ENCODE measurements at regions of chr11 and their contacts with region 1.

Region 1: GRCh38 chr11:36258730-36259360 is 30.4 kb downstream of the COMMD9 start:
- DNase-seq: no peak
- ATAC-seq: peak; percentile 87
- H3K4me3 ChIP-seq: no peak overlapping the region
- H3K27ac ChIP-seq: no peak overlapping the region
- H3K4me1 ChIP-seq: no peaks in the 10 kb centered on the region
- H3K27me3 ChIP-seq: no peaks in the 10 kb centered on the region; a peak in 1 of 4 replicates
- CTCF ChIP-seq: peak; percentile 42 to 45 (median 43); a peak in 5 of 6 replicates
- EP300 ChIP-seq: no peak
- POLR2A ChIP-seq: no peak
- RAD21 ChIP-seq: peak; percentile 62

Region 2: GRCh38 chr11:35969089-35970042 is 289.5 kb before region 1 on chr11:
- CTCF ChIA-PET with region 1: no interaction called
- POLR2A ChIA-PET with region 1: no interaction called
- RAD21 ChIA-PET with region 1: no interaction called
- SMC1A ChIA-PET with region 1: no interaction called
- in situ Hi-C with region 1: no loop called
- intact Hi-C with region 1: no loop called
- DNase-seq: no peak
- ATAC-seq: peak; percentile 67
- H3K4me3 ChIP-seq: no peak overlapping the region
- H3K27ac ChIP-seq: no peak overlapping the region
- H3K4me1 ChIP-seq: peaks cover 7% of the 10 kb centered on the region
- H3K27me3 ChIP-seq: no peaks in the 10 kb centered on the region
- CTCF ChIP-seq: no peak
- EP300 ChIP-seq: no peak
- POLR2A ChIP-seq: no peak
- RAD21 ChIP-seq: no peak

Region 3: GRCh38 chr11:36009473-36009872 is 249.4 kb before region 1 on chr11:
- CTCF ChIA-PET with region 1: no interaction called
- POLR2A ChIA-PET with region 1: no interaction called
- RAD21 ChIA-PET with region 1: no interaction called
- SMC1A ChIA-PET with region 1: no interaction called
- in situ Hi-C with region 1: no loop called
- intact Hi-C with region 1: no loop called
- DNase-seq: no peak
- ATAC-seq: no peak
- H3K4me3 ChIP-seq: no peak overlapping the region
- H3K27ac ChIP-seq: no peak overlapping the region
- H3K4me1 ChIP-seq: no peaks in the 10 kb centered on the region
- H3K27me3 ChIP-seq: no peaks in the 10 kb centered on the region; a peak in 1 of 4 replicates
- CTCF ChIP-seq: no peak
- EP300 ChIP-seq: no peak
- POLR2A ChIP-seq: no peak
- RAD21 ChIP-seq: no peak

Region 4: DNA sequence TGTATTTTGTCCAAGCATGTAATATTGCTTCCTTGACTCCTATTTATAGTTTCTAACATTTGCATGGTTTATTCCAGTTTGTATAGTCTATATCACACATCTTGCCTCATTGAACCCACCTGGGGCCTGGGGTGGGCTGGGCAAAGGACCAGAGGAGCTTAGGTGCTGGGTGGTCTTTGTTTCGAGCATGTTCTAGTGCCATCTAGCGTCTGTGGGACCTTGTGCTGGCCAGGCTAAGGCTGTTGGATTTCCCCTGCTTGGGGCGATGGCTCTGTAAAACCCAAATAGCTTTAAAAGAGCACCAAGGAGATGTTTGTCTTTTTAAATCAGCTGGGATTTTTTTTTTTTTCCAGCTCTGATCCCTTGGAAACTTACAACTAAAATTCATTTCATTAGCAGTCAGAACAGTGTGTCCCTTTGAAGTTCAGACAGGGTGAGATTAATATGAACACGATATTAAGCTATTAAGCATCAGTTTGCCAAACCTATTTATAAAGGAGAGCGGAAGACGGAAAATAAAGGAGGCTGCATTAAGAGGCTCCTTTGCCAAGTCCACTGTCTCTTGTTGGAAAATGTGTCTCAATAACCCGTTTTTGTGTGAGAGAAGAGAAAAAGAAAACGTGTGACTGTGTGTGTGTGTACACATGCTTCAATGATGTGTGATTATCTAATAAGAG is 127.0 kb before region 1 on chr11:
- CTCF ChIA-PET with region 1: interaction called, 10 read pairs
- POLR2A ChIA-PET with region 1: no interaction called
- RAD21 ChIA-PET with region 1: interaction called, 7 read pairs
- SMC1A ChIA-PET with region 1: interaction called, 6 read pairs
- in situ Hi-C with region 1: no loop called
- intact Hi-C with region 1: loop called (anchors 5 kb)
- DNase-seq: no peak
- ATAC-seq: peak; percentile 95
- H3K4me3 ChIP-seq: no peak overlapping the region
- H3K27ac ChIP-seq: no peak overlapping the region
- H3K4me1 ChIP-seq: no peaks in the 10 kb centered on the region
- H3K27me3 ChIP-seq: peaks cover 0 to 2% of the 10 kb centered on the region in 2 experiments; a peak in 2 of 4 replicates
- CTCF ChIP-seq: peak; percentile 63 to 77 (median 74)
- EP300 ChIP-seq: no peak
- POLR2A ChIP-seq: no peak
- RAD21 ChIP-seq: peak; percentile 78

Region 5: DNA sequence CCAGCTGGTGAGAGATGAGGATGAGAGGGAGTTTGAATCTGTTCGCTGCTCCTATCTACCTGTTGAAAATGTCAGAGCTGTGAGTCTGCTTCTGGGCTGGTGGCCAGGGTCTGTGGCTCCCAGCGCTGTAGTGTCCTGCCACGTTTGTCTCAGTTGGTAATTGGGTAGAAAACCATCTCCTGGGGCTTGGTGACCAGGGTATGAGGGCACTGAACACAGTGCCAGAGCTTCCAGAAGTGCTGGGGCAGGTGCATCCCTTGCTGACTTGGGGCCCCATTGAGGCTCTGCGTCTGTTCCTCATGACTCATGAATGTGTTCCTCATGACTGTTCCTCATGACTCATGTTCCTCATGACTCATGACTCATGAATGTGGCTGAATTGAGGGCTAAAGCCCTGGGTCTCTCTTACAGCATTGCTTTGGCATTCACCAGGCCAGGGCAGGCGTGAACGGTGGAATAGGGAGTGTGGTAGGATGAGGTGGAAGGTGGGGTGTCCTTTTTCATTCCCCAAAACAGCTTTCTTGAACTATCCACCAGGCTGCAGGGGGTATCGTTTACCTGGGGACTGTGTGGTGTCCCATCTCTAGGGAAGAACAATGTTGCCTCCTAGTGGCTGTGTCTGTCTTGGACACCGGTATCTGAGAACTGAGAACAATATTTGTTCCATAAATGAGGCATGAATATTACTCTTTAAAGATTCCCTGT is 109.2 kb before region 1 on chr11:
- CTCF ChIA-PET with region 1: interaction called, 3 read pairs
- POLR2A ChIA-PET with region 1: no interaction called
- RAD21 ChIA-PET with region 1: no interaction called
- SMC1A ChIA-PET with region 1: no interaction called
- in situ Hi-C with region 1: no loop called
- intact Hi-C with region 1: loop called (anchors 5 kb)
- DNase-seq: peak; percentile 31
- ATAC-seq: peak; percentile 90
- H3K4me3 ChIP-seq: no peak overlapping the region
- H3K27ac ChIP-seq: no peak overlapping the region
- H3K4me1 ChIP-seq: no peaks in the 10 kb centered on the region
- H3K27me3 ChIP-seq: no peaks in the 10 kb centered on the region
- CTCF ChIP-seq: peak; percentile 48 to 62 (median 61); a peak in 5 of 6 replicates
- EP300 ChIP-seq: peak; percentile 36 to 43; a peak in 1 of 4 replicates
- POLR2A ChIP-seq: no peak
- RAD21 ChIP-seq: peak; percentile 72

Region 6: GRCh38 chr11:36271794-36272407 is 13.1 kb after region 1 on chr11:
- CTCF ChIA-PET with region 1: interaction called, 18 read pairs
- POLR2A ChIA-PET with region 1: no interaction called
- RAD21 ChIA-PET with region 1: interaction called, 3 read pairs
- SMC1A ChIA-PET with region 1: interaction called, 4 read pairs
- in situ Hi-C with region 1: no loop called
- intact Hi-C with region 1: no loop called
- DNase-seq: no peak
- ATAC-seq: no peak
- H3K4me3 ChIP-seq: no peak overlapping the region
- H3K27ac ChIP-seq: no peak overlapping the region
- H3K4me1 ChIP-seq: no peaks in the 10 kb centered on the region
- H3K27me3 ChIP-seq: no peaks in the 10 kb centered on the region
- CTCF ChIP-seq: 0 out of 6 replicates have a peak, but pooled peaks of 1 of the 3 experiments have one; percentile 1
- EP300 ChIP-seq: no peak
- POLR2A ChIP-seq: no peak
- RAD21 ChIP-seq: no peak

Region 7: GRCh38 chr11:36541001-36541400 is 282.2 kb after region 1 on chr11:
- CTCF ChIA-PET with region 1: no interaction called
- POLR2A ChIA-PET with region 1: no interaction called
- RAD21 ChIA-PET with region 1: no interaction called
- SMC1A ChIA-PET with region 1: no interaction called
- in situ Hi-C with region 1: no loop called
- intact Hi-C with region 1: no loop called
- DNase-seq: peak; percentile 32
- ATAC-seq: peak; percentile 97
- H3K4me3 ChIP-seq: no peak overlapping the region
- H3K27ac ChIP-seq: no peak overlapping the region
- H3K4me1 ChIP-seq: no peaks in the 10 kb centered on the region
- H3K27me3 ChIP-seq: peaks cover 2% of the 10 kb centered on the region in 2 experiments; a peak in 3 of 4 replicates
- CTCF ChIP-seq: peak; percentile 38 to 62 (median 54); a peak in 5 of 6 replicates
- EP300 ChIP-seq: peak; percentile 57 to 65; a peak in 3 of 4 replicates
- POLR2A ChIP-seq: no peak
- RAD21 ChIP-seq: peak; percentile 56

Region 8: DNA sequence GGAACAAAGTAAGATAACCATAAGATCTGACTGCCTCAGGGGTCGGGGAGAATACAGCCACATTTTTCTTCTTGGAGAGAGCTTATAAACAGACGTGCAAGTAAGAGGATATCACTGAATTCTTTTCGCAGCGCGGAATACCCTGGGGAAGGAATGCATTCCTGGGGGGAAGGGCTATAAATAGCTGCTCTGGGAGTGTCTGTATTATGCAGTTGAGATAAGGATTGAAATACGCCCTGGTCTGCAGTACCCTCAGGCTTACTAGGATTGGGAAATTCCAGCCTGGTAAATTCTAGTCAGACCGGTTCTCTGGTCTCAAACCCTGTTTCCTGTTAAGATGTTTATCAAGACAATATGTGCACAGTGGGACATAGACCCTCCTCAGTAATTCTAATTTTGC is 1830.9 kb after region 1 on chr11:
- CTCF ChIA-PET with region 1: no interaction called
- POLR2A ChIA-PET with region 1: no interaction called
- RAD21 ChIA-PET with region 1: no interaction called
- SMC1A ChIA-PET with region 1: no interaction called
- in situ Hi-C with region 1: no loop called
- intact Hi-C with region 1: no loop called
- DNase-seq: no peak
- ATAC-seq: no peak
- H3K4me3 ChIP-seq: no peak overlapping the region
- H3K27ac ChIP-seq: no peak overlapping the region
- H3K4me1 ChIP-seq: no peaks in the 10 kb centered on the region
- H3K27me3 ChIP-seq: no peaks in the 10 kb centered on the region
- CTCF ChIP-seq: no peak
- EP300 ChIP-seq: no peak
- POLR2A ChIP-seq: no peak
- RAD21 ChIP-seq: no peak

Measured in GM12878 (cell line).